ENCODE measurements at regions of chr20 and their contacts with region 1.

Region 1: GRCh38 chr20:25178563-25179438 is 16.7 kb upstream of the ENTPD6 start:
- DNase-seq: peak; percentile 26
- H3K4me3 Mint-ChIP-seq: no peak overlapping the region
- H3K27ac Mint-ChIP-seq: no peak overlapping the region
- H3K4me1 Mint-ChIP-seq: peaks cover 13% of the 10 kb centered on the region
- H3K27me3 Mint-ChIP-seq: no peaks in the 10 kb centered on the region
- CTCF ChIP-seq: peak; percentile 37

Region 2: DNA sequence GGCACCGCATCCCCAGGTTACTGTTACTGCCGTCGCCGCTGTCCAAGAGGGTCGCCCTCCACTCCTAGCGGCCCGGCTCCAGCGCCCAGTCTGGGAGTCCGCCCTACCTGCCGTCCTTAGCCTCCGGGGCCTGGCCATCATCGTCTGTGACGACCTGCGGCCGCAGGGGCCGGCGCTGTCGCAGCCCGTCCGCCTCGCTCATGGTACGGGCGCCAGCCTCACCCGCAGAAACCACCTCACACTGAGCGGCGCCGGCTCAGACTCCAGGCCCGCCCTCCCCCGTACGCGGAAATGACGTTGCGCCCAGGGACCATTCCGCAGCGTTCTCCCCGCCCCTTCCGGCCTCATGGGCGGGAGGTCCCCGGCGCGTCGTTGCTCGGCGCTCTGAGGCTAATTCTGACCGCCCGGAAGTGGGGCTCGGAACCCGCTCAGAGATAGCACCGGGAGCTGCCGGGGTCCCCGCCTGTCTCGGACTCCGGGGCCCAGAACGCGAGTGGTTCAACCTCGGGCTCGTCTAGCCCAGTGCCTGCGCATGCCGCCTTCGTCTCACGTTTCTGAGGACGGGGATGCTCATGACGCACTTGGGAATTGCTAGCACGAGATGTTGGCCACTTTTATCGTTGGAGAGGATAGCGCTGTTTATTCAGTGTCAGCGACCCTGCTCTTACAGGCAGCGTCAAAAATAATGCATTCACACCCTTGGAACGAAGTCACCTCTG is 186.2 kb before region 1 on chr20 and contains the start of gene APMAP:
- CTCF ChIA-PET with region 1: no interaction called
- intact Hi-C with region 1: loop called (anchors 2 kb)
- DNase-seq: peak; percentile 82
- H3K4me3 Mint-ChIP-seq: peak within 1 kb of the TSS; percentile 81
- H3K27ac Mint-ChIP-seq: peak within 1 kb of the TSS; percentile 68
- H3K4me1 Mint-ChIP-seq: peaks cover 16% of the 10 kb centered on the region
- H3K27me3 Mint-ChIP-seq: no peaks in the 10 kb centered on the region
- CTCF ChIP-seq: no peak
- total RNA-seq, gene APMAP: 29.9 and 30.7 TPM in 2 replicates

Region 3: DNA sequence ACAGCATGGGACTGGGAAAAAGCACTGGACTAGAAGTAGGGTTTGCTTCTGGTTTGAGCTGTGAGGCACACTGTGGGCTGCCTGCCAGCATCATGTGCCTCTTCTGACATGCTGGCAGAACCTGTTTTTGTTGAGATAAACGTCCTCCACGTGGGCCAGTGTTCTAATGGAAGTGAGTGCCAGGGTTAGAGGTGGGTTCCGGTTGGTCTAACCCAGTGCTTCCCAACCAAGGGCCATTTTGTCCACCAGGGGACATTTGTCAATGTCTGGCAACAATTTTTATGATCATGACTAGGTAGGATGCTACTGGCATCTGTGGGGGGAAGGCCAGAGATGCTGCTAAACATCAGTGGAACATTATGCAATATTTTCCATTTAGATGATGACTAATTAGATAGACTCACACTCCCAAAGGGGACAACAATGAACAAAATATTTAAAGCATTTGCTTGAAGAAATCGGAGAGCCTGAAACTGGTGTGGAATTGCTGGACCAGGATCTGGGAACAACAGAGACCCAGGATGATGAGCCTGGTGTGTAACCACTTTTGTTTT is 178.5 kb before region 1 on chr20:
- CTCF ChIA-PET with region 1: no interaction called
- intact Hi-C with region 1: loop called (anchors 2 kb)
- DNase-seq: peak; percentile 62
- H3K4me3 Mint-ChIP-seq: no peak overlapping the region
- H3K27ac Mint-ChIP-seq: peak overlapping the region; percentile 86
- H3K4me1 Mint-ChIP-seq: peaks cover 9% of the 10 kb centered on the region
- H3K27me3 Mint-ChIP-seq: no peaks in the 10 kb centered on the region
- CTCF ChIP-seq: no peak

Region 4: GRCh38 chr20:25077610-25078169 is 101.1 kb before region 1 on chr20:
- CTCF ChIA-PET with region 1: no interaction called
- intact Hi-C with region 1: loop called (anchors 2 kb)
- DNase-seq: no peak
- H3K4me3 Mint-ChIP-seq: peak overlapping the region; percentile 58
- H3K27ac Mint-ChIP-seq: no peak overlapping the region
- H3K4me1 Mint-ChIP-seq: peaks cover 8% of the 10 kb centered on the region
- H3K27me3 Mint-ChIP-seq: no peaks in the 10 kb centered on the region
- CTCF ChIP-seq: no peak

Region 5: DNA sequence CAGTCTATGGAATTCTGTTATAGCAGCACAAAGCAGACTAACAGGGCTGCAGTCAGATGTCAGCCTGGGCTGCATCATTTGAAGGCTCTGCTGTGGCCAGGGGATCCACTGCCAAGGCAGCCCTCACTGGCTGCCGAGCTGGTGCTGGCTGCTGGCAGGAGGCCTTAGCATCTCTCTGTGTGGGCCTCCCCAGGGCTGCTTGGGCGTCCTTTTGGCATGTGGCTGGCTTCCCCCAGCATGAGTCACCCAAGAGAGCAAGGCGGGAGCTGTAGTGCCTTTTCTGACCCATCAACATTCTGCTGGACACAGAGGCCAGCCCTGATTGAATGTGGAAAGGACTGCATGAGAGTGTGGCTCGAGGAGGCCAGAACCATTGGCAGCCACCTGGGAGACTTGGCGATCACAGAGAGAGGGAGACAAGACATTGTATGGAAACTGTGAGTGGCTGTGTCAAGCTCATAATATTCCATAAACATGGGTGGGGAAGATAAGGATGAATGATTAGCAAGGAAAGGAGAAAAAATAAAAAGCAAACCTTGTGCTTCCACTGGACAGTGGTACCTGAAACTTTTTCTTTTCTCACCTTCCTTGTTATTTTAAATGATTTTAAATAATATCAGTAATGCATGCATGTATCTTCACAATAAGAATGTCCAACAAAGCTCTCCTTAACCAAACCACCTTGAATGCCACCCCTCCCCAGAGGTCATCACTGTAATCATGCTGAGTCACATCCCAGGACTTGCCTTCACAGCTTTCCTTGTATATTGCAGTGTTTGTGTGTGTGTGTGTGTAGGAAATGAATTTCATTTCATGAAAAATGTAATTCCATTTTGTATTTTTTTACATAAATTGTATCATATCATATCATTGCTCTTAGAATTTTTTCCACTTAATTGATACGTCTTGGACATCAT is 41.9 kb before region 1 on chr20:
- CTCF ChIA-PET with region 1: no interaction called
- intact Hi-C with region 1: loop called (anchors 5 kb)
- DNase-seq: peak; percentile 41
- H3K4me3 Mint-ChIP-seq: no peak overlapping the region
- H3K27ac Mint-ChIP-seq: no peak overlapping the region
- H3K4me1 Mint-ChIP-seq: peaks cover 8% of the 10 kb centered on the region
- H3K27me3 Mint-ChIP-seq: no peaks in the 10 kb centered on the region
- CTCF ChIP-seq: no peak

Region 6: DNA sequence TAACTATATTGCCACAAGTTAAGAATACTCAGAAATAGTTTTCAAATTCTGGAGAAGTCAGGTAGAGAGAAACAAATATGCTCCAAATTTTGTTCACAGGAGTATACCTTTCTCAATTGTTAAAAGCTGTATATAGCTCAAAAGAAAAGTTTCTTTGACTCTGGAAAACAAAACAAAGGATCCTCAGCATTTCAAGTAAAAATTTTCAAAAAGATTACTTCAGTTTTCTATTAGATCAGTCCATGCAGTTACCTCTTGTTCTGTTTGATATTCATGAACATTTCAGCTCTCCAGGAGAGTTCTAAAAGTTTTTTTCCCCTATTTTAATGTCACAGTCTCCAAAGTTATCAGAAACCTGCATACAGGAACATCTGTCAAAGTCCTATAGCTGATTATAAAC is 13.7 kb before region 1 on chr20:
- CTCF ChIA-PET with region 1: no interaction called
- intact Hi-C with region 1: no loop called
- DNase-seq: no peak
- H3K4me3 Mint-ChIP-seq: no peak overlapping the region
- H3K27ac Mint-ChIP-seq: no peak overlapping the region
- H3K4me1 Mint-ChIP-seq: no peaks in the 10 kb centered on the region
- H3K27me3 Mint-ChIP-seq: no peaks in the 10 kb centered on the region
- CTCF ChIP-seq: no peak

Measured in Calu3 (cell line).